ENCODE measurements at regions of chr5 and their contacts with region 1.

Region 1: DNA sequence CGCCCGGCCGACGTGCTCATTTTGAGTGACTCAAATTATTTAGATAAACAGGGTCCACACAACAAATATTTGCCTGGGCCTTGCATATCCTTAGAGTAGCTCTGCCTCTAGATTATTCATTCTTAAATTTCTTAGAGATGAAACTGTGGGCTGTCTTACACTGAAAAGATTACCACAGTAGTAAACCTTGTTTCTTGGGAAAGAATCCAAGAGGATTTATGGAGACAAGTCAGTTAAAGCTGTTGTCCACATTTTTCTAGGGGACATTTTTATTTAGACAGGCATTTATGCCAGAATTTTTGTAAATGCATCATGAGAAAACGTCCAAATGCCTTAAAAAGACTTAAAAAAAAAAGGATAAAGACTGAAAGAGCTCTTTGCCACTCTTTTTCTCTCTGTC is 32.6 kb upstream of the RANBP3L start:
- DNase-seq: no peak
- H3K4me3 ChIP-seq: no peak overlapping the region
- H3K4me3 Mint-ChIP-seq: no peak overlapping the region
- H3K27ac Mint-ChIP-seq: no peak overlapping the region
- H3K4me1 ChIP-seq: no peaks in the 10 kb centered on the region
- H3K4me1 Mint-ChIP-seq: no peaks in the 10 kb centered on the region
- H3K27me3 ChIP-seq: no peaks in the 10 kb centered on the region
- H3K27me3 Mint-ChIP-seq: no peaks in the 10 kb centered on the region
- CTCF ChIP-seq: no peak

Region 2: DNA sequence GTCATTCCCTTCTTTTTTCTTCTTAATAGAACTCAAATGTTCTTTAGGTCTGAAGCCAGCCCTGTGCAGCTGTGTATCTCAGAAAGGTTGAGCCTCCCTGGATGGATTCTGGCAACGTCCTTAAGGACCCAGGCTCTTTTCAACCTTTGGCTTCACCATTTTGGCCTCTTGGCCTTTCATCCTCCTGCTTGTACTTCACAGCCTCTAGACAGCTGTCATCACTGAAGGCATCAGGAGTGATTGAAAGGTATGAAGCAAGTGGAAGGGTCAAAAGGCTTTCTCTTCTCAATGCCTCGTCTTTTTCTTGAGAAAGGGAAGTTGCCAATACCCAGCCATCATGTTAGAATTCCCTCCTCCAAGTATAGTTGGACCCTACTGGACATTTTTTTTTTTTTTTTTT is 48.6 kb after region 1 on chr5:
- CTCF ChIA-PET with region 1: no interaction called
- POLR2A ChIA-PET with region 1: no interaction called
- intact Hi-C with region 1: loop called (anchors 1 kb)
- DNase-seq: no peak
- H3K4me3 ChIP-seq: no peak overlapping the region
- H3K4me3 Mint-ChIP-seq: no peak overlapping the region
- H3K27ac Mint-ChIP-seq: no peak overlapping the region
- H3K4me1 ChIP-seq: no peaks in the 10 kb centered on the region
- H3K4me1 Mint-ChIP-seq: peaks cover 34% of the 10 kb centered on the region
- H3K27me3 ChIP-seq: no peaks in the 10 kb centered on the region
- H3K27me3 Mint-ChIP-seq: no peaks in the 10 kb centered on the region
- CTCF ChIP-seq: no peak